Caco-2 (cell line): ENCODE measurements at regions of chr13 and their contacts with region 1.

Region 1: GRCh38 chr13:81639984-81640582 is 1299.2 kb upstream of the SPRY2 start:
- DNase-seq: peak; percentile 38 to 64
- H3K4me3 ChIP-seq: no peak overlapping the region
- H3K4me3 Mint-ChIP-seq: no peak overlapping the region
- H3K27ac Mint-ChIP-seq: no peak overlapping the region
- H3K4me1 ChIP-seq: no peaks in the 10 kb centered on the region
- H3K4me1 Mint-ChIP-seq: no peaks in the 10 kb centered on the region
- H3K27me3 ChIP-seq: no peaks in the 10 kb centered on the region
- H3K27me3 Mint-ChIP-seq: no peaks in the 10 kb centered on the region
- CTCF ChIP-seq: peak; percentile 71 to 73

Region 2: DNA sequence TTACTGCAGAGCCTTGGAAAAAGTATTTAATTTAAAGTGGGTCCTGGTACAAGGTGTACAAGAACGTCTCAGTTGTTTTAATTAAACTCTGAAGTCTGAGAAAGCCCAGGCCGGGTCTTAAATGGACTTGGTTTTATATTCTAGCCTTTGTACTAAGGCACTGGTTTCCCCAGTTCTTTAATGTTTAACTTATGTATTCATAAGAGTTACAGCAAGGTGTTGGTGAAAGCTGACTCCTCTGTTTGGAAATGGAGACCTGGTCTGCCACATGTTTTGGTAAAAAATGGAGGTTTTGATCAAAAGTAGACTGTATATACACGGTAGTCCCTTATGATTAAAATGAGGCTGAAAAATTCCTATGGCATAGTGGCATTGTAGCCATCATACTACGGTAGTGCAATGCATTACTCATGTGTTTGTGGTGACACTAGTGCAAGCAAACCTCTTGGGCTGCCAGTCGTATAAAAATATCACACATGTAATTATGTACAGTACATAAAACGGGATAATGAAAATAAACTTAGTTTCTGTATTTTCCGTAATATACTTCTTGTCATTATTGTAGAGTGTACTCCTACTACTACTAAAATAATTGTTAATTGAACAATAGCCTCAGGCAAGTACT is 415.8 kb before region 1 on chr13:
- CTCF ChIA-PET with region 1: no interaction called
- POLR2A ChIA-PET with region 1: no interaction called
- intact Hi-C with region 1: no loop called
- DNase-seq: peak in 1 of 2 experiments; percentile 10
- H3K4me3 ChIP-seq: no peak overlapping the region
- H3K4me3 Mint-ChIP-seq: no peak overlapping the region
- H3K27ac Mint-ChIP-seq: peak overlapping the region; percentile 63
- H3K4me1 ChIP-seq: peaks cover 14% of the 10 kb centered on the region
- H3K4me1 Mint-ChIP-seq: peaks cover 9% of the 10 kb centered on the region
- H3K27me3 ChIP-seq: no peaks in the 10 kb centered on the region
- H3K27me3 Mint-ChIP-seq: no peaks in the 10 kb centered on the region
- CTCF ChIP-seq: no peak

Region 3: DNA sequence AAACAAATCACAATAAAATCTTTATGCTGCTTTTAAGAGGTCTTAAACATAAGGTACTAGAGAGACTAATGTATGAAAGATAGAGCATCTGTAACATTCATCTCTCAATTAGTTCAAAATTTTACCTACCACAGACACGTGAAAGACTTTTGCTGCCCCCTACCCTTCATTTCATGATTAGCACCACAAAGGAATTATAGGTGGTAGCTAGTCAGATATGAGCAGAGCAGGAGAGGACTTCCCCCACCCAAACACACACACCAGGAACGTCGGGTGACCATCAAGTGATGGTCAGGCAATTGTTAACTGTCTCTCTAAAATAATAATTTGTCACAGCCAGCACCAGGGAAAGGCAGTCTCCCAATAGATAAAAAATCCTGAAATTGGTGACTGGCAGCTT is 232.5 kb after region 1 on chr13:
- CTCF ChIA-PET with region 1: interaction called, 8 read pairs
- POLR2A ChIA-PET with region 1: no interaction called
- intact Hi-C with region 1: loop called (anchors 1 kb)
- DNase-seq: peak in 1 of 2 experiments; percentile 53
- H3K4me3 ChIP-seq: no peak overlapping the region
- H3K4me3 Mint-ChIP-seq: no peak overlapping the region
- H3K27ac Mint-ChIP-seq: no peak overlapping the region
- H3K4me1 ChIP-seq: no peaks in the 10 kb centered on the region
- H3K4me1 Mint-ChIP-seq: peaks cover 6% of the 10 kb centered on the region
- H3K27me3 ChIP-seq: no peaks in the 10 kb centered on the region
- H3K27me3 Mint-ChIP-seq: peaks cover 3% of the 10 kb centered on the region
- CTCF ChIP-seq: peak; percentile 32 to 36

Region 4: GRCh38 chr13:81957133-81957532 is 317.1 kb after region 1 on chr13:
- CTCF ChIA-PET with region 1: no interaction called
- POLR2A ChIA-PET with region 1: no interaction called
- intact Hi-C with region 1: loop called (anchors 1 kb)
- DNase-seq: no peak
- H3K4me3 ChIP-seq: no peak overlapping the region
- H3K4me3 Mint-ChIP-seq: no peak overlapping the region
- H3K27ac Mint-ChIP-seq: no peak overlapping the region
- H3K4me1 ChIP-seq: no peaks in the 10 kb centered on the region
- H3K4me1 Mint-ChIP-seq: no peaks in the 10 kb centered on the region
- H3K27me3 ChIP-seq: no peaks in the 10 kb centered on the region
- H3K27me3 Mint-ChIP-seq: no peaks in the 10 kb centered on the region
- CTCF ChIP-seq: peak; percentile 22 to 47

Region 5: GRCh38 chr13:81987159-81987558 is 347.1 kb after region 1 on chr13:
- CTCF ChIA-PET with region 1: interaction called, 3 read pairs
- POLR2A ChIA-PET with region 1: no interaction called
- intact Hi-C with region 1: loop called (anchors 2 kb)
- DNase-seq: peak in 1 of 2 experiments; percentile 15
- H3K4me3 ChIP-seq: no peak overlapping the region
- H3K4me3 Mint-ChIP-seq: no peak overlapping the region
- H3K27ac Mint-ChIP-seq: no peak overlapping the region
- H3K4me1 ChIP-seq: no peaks in the 10 kb centered on the region
- H3K4me1 Mint-ChIP-seq: no peaks in the 10 kb centered on the region
- H3K27me3 ChIP-seq: no peaks in the 10 kb centered on the region
- H3K27me3 Mint-ChIP-seq: no peaks in the 10 kb centered on the region
- CTCF ChIP-seq: peak in 1 of 2 experiments; percentile 29